H1 (cell line): ENCODE measurements at regions of chr20 and their contacts with region 1.

Region 1: DNA sequence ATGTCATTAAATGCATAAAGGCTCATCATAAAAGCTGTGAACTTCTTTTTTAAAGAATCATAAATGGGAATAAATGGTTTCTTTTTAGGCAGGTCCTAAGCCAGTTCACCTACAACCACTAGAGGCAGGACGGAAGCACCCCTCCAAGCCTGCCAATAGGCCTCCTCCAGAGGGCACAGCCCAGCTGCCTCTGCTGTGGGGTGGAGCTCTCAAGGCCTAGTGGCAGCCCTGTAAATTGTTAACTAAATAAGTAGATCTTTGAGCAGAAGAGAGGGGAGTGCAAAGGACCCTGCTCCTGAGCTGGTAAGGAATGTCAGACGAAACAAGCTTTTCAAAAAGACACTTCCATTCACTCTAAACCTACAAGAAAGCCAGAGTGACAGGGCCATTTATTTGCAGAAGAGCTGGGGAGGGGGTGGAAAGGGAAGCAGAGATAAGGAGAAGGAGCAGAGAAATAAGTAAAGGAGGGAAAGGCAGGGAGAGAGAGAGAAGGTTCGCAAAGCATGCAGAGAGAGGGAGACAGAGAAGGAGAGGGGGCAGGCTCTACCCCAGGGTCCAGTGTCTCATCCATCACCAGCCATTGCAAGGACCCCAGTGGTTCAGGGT is 18.0 kb upstream of the MAFB start:
- DNase-seq: peak in 1 of 2 experiments; percentile 59
- H3K4me3 ChIP-seq: no peak overlapping the region
- H3K27ac ChIP-seq: no peak overlapping the region
- H3K4me1 ChIP-seq: peaks cover 0 to 3% (median 0%) of the 10 kb centered on the region in 4 experiments; a peak in 1 of 7 replicates
- H3K27me3 ChIP-seq: no peaks in the 10 kb centered on the region
- CTCF ChIP-seq: peak; percentile 69 to 90 (median 74)
- EP300 ChIP-seq: no peak
- POLR2A ChIP-seq: no peak
- RAD21 ChIP-seq: peak; percentile 54 to 63

Region 2: DNA sequence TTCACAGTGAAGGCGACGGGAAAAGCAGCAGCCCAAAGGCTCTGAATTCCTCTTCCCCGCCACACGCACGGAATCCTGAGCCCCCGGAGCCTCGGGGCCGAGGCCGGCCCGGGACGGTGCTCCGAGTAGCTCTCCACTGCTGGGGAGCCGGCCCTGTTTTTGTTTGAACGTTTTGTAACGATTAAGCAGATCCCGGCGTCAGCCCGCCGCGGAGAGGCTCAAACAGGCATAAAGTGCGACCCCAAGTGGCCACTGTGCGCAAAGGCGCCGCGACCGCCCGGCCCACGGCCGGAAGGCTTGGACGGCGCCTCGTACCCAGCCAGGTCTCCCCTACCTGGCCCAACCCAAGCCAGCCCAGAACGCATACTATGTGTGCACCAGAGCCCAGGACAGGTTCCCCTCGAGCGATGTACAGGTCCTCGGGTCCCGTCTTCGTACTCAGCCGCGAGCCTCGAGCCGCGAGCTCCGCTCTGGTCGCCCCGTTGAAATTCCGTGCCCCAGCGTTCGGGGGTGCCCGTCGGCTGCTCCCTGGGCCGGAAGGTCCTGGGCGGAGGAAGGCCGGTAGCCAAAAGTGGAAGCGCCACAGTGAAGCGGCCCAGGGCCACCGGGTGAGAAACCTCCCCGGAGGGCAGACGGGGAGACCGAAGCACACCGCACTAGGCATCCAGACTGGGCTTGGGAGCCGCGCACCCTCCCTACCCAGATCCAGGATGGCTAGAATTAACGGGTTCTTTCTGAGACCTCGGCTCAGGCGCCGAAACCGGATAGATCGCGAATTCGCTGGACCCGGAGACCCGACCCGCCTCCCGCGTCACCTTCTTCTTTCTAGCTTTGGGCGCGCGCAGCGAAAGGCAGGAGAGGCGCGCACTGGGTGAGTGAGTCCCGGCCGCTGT is 16.9 kb before region 1 on chr20:
- CTCF ChIA-PET with region 1: interaction called, 12 read pairs
- POLR2A ChIA-PET with region 1: interaction called, 4 read pairs
- DNase-seq: peak; percentile 82 to 97
- H3K4me3 ChIP-seq: peak overlapping the region; percentile 27 to 75 (median 64)
- H3K27ac ChIP-seq: no peak overlapping the region
- H3K4me1 ChIP-seq: peaks cover 0 to 42% (median 24%) of the 10 kb centered on the region in 4 experiments; a peak in 6 of 7 replicates
- H3K27me3 ChIP-seq: peaks cover 77 to 98% (median 91%) of the 10 kb centered on the region in 4 experiments
- CTCF ChIP-seq: peak; percentile 79 to 88 (median 84)
- EP300 ChIP-seq: no peak
- POLR2A ChIP-seq: no peak
- RAD21 ChIP-seq: peak; percentile 75 to 84

Region 3: GRCh38 chr20:40718982-40719729 is 12.1 kb after region 1 on chr20:
- CTCF ChIA-PET with region 1: interaction called, 26 read pairs
- POLR2A ChIA-PET with region 1: no interaction called
- DNase-seq: no peak
- H3K4me3 ChIP-seq: no peak overlapping the region
- H3K27ac ChIP-seq: no peak overlapping the region
- H3K4me1 ChIP-seq: no peaks in the 10 kb centered on the region
- H3K27me3 ChIP-seq: no peaks in the 10 kb centered on the region
- CTCF ChIP-seq: no peak
- EP300 ChIP-seq: no peak
- POLR2A ChIP-seq: no peak
- RAD21 ChIP-seq: no peak

Region 4: GRCh38 chr20:40724566-40724965 is 17.5 kb after region 1 on chr20:
- CTCF ChIA-PET with region 1: interaction called, 26 read pairs
- POLR2A ChIA-PET with region 1: no interaction called
- DNase-seq: no peak
- H3K4me3 ChIP-seq: no peak overlapping the region
- H3K27ac ChIP-seq: no peak overlapping the region
- H3K4me1 ChIP-seq: peaks cover 0 to 2% (median 0%) of the 10 kb centered on the region in 4 experiments; a peak in 1 of 7 replicates
- H3K27me3 ChIP-seq: no peaks in the 10 kb centered on the region
- CTCF ChIP-seq: no peak
- EP300 ChIP-seq: no peak
- POLR2A ChIP-seq: no peak
- RAD21 ChIP-seq: no peak

Region 5: DNA sequence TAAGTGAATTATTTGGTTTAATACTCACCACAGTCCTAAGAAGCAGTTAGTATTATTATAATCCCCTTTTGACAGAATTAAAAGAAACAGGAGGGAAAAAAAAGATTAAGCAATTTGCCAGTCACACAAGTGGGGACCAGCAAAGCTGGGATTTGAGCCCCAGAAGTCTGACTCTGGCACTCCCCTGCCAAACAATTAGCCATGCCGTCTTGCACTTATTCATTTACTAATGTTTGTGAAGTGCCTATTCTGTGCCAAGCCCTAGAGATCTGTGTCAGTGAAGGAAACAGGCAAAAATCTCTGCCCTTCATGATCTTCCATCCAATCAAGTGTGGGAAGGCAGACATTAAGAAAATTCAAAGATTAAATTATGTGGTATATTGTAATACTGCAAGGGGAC is 195.6 kb after region 1 on chr20:
- CTCF ChIA-PET with region 1: no interaction called
- POLR2A ChIA-PET with region 1: no interaction called
- DNase-seq: no peak
- H3K4me3 ChIP-seq: no peak overlapping the region
- H3K27ac ChIP-seq: no peak overlapping the region
- H3K4me1 ChIP-seq: no peaks in the 10 kb centered on the region
- H3K27me3 ChIP-seq: no peaks in the 10 kb centered on the region
- CTCF ChIP-seq: no peak
- EP300 ChIP-seq: no peak
- POLR2A ChIP-seq: no peak
- RAD21 ChIP-seq: no peak